Endothelial cell of umbilical vein (primary cell): ENCODE measurements at regions of chr15 and their contacts with region 1.

Region 1: DNA sequence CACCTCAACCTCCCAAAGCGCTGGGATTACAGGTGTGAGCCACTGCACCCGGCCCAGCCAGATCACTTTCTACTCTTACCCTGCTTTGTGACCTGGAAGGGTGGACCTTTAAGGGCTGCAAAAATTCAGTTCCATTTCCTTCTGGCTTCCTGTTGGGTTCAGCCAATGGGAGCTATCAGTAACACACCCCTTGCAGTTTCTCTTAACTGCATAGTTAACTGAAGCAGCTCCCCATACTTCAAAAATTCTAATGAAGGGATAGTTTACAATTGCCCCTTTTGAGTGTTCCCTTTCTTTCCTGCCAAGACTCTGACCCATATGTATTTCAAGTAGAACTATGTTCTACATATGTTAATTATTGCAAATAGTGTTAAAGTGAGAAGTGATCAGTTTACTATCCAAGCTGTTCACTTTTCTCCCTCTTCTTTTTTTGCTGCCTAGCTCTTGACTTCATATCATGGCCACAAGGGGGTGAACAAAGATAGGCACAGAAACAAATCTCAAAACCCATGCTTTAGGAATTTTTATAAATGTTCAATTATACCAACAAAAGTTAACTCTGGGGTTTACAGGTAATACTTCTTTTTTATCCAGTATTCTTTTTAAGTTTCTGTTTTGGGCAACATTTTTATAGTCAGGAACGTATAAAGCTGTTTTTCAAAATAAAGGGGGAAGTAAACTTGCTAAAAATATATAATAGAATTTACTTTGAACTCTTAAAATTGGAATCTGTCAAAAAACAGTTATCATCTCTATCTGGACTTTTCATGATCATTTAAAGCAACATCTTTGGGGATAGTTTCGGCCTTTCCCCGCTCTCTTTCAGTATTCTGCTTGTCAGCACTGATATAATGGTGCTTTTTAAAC is 8.1 kb downstream of the PGBD4 start:
- DNase-seq: peak; percentile 56
- H3K4me3 ChIP-seq: no peak overlapping the region
- H3K27ac ChIP-seq: no peak overlapping the region
- H3K4me1 ChIP-seq: no peaks in the 10 kb centered on the region
- H3K27me3 ChIP-seq: no peaks in the 10 kb centered on the region
- CTCF ChIP-seq: peak; percentile 38 to 57
- POLR2A ChIP-seq: no peak

Region 2: DNA sequence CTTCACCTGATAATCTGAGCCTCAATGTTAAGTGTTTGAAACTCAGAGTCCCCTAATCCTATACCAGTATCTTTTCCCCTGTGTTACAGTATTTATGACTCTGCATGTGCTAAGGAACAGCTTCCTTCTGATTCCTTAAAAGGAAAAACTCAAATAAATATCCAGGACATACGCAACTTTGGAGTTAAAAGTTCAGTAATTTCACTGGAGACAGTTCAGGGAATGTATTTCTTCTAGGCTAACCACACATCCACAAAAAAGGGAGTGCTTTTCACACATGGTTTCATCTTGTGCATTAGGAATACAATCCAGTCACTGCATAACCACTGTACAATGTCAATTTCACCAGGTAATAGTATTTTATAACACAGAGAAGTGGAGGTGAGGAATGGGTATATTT is 22.9 kb after region 1 on chr15:
- CTCF ChIA-PET with region 1: interaction called, 11 read pairs
- POLR2A ChIA-PET with region 1: no interaction called
- dilution Hi-C with region 1: no loop called
- intact Hi-C with region 1: no loop called
- DNase-seq: no peak
- H3K4me3 ChIP-seq: no peak overlapping the region
- H3K27ac ChIP-seq: no peak overlapping the region
- H3K4me1 ChIP-seq: no peaks in the 10 kb centered on the region
- H3K27me3 ChIP-seq: no peaks in the 10 kb centered on the region
- CTCF ChIP-seq: no peak
- POLR2A ChIP-seq: no peak

Region 3: DNA sequence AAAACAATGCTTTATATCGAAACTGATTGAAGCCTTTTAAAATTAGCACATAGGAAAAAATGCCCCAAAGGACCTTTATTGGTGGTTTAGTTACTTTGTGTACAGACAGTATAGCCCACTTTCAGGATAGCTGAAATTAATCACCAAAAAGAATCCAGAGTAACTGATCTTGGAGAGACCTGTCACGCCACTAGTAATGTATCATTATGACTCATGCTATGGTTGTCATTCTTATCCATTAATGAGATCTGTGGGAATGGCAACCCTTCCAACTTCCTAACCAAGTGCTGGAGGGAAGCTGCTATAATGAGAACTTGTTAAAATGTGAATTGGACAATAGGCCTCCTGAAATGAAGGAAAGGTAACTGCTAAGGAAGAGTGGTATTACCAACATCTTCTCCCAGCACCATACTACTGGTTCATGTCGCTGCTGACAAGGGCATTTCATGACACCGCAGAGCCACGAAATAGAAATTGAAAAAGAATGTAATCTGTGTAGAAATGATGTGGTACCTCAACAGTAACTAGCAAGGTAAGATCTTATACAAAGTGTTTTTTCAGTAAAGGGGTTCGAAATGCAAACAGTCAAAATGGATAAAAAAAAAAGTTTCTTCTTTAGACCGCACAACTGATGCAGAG is 107.7 kb after region 1 on chr15:
- CTCF ChIA-PET with region 1: interaction called, 46 read pairs
- POLR2A ChIA-PET with region 1: no interaction called
- dilution Hi-C with region 1: no loop called
- intact Hi-C with region 1: no loop called
- DNase-seq: no peak
- H3K4me3 ChIP-seq: no peak overlapping the region
- H3K27ac ChIP-seq: no peak overlapping the region
- H3K4me1 ChIP-seq: no peaks in the 10 kb centered on the region
- H3K27me3 ChIP-seq: no peaks in the 10 kb centered on the region
- CTCF ChIP-seq: no peak
- POLR2A ChIP-seq: no peak

Region 4: GRCh38 chr15:34241372-34242330 is 131.6 kb after region 1 on chr15:
- CTCF ChIA-PET with region 1: interaction called, 12 read pairs
- POLR2A ChIA-PET with region 1: no interaction called
- dilution Hi-C with region 1: no loop called
- intact Hi-C with region 1: no loop called
- DNase-seq: peak; percentile 67
- H3K4me3 ChIP-seq: no peak overlapping the region
- H3K27ac ChIP-seq: no peak overlapping the region
- H3K4me1 ChIP-seq: peaks cover 21% of the 10 kb centered on the region
- H3K27me3 ChIP-seq: no peaks in the 10 kb centered on the region
- CTCF ChIP-seq: peak; percentile 47 to 51
- POLR2A ChIP-seq: no peak

Region 5: DNA sequence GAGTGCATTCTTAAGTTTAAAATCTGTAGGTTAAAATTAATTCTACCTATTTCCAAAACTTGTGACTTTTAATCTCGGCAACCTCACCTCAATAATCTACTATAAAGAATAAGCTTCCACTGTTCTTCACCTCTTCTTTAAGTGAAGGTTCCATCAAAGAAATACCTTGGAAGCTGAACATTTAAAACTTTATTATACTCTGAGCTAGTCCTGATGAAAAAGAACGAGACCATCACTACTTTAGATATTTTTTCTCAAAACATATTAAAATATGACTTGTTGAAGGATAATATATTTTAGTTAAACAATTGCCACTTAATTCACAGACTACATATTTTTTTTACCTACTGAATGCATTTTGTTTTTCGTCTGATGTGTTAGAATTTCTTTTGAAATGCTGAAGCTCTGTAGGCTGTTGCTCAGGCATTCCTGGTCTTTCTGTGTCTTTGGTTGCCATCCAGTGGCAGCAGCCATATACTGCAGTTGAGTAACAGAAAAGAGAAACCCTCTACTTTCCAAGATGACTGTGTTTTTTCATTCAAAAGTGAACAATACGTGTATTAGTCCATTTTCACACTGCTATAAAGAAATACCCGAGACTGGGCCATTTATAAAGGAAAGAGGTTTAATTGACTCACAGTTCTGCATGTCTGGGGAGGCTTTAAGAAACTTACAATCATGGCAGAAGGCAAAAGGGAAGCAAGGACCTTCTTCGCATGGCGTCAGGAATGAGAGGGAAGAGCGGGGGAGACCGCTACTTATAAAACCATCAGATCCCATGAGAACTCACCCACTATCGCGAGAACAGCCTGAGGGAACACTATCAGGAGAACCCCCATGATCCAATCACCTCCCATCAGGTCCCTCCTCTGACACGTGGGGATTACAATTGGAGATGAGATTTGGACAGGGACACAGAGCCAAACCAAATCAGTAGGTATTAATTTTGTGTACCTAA is 478.0 kb after region 1 on chr15:
- CTCF ChIA-PET with region 1: interaction called, 54 read pairs
- POLR2A ChIA-PET with region 1: no interaction called
- dilution Hi-C with region 1: no loop called
- intact Hi-C with region 1: loop called (anchors 1 kb)
- DNase-seq: peak; percentile 74
- H3K4me3 ChIP-seq: peak overlapping the region in 1 of 3 experiments; percentile 58
- H3K27ac ChIP-seq: no peak overlapping the region
- H3K4me1 ChIP-seq: peaks cover 5% of the 10 kb centered on the region
- H3K27me3 ChIP-seq: no peaks in the 10 kb centered on the region
- CTCF ChIP-seq: peak; percentile 64 to 74
- POLR2A ChIP-seq: no peak